ENCODE measurements at regions of chr10 and their contacts with region 1.

Region 1: DNA sequence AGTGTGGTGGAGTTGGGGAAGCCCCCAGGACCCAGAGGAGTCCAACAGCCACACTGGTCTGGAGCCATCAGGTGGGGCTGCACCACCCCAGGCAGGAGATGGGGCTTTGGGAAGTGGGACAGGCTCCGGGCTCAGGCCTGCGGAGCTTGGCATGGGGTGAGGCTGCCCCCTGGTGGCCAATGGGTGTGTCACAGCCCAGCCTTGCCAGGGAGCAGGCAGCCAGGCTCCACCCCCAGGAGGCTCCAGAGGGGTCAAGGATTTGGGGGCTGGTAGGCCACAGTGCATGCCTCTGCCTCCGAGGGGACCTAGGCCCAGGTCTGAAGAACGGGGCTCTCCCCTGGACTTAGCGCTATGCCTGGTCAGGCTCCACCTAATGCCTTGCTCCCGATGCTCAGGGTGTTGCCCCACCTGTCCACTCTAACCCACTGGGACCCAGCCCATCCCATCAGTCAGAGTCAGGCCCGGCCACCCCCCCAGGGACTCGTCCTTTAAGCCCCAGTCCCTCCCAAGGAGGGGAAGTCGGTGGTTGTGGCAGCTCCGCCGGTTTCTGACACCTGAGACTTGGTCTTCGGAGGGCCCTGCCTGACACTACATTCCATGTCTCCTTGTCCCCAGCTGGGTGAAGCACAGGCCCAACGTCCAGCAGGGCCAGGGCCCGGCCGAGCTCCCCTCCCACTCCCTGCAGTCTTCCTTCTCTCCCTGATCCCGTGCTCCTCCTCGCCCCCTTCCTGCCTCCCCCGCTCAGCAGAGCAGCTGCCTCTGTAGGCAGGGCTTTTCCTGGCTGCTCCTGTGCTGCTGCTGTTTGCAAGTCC is 11.3 kb upstream of the SAMD8 start:
- DNase-seq: peak; percentile 99
- ATAC-seq: peak; percentile 90
- H3K4me3 ChIP-seq: no peak overlapping the region
- H3K27ac ChIP-seq: no peak overlapping the region
- H3K4me1 ChIP-seq: peaks cover 7% of the 10 kb centered on the region; the same call in 1 of the 2 replicates
- H3K27me3 ChIP-seq: no peaks in the 10 kb centered on the region
- CTCF ChIP-seq: peak; percentile 100

Region 2: DNA sequence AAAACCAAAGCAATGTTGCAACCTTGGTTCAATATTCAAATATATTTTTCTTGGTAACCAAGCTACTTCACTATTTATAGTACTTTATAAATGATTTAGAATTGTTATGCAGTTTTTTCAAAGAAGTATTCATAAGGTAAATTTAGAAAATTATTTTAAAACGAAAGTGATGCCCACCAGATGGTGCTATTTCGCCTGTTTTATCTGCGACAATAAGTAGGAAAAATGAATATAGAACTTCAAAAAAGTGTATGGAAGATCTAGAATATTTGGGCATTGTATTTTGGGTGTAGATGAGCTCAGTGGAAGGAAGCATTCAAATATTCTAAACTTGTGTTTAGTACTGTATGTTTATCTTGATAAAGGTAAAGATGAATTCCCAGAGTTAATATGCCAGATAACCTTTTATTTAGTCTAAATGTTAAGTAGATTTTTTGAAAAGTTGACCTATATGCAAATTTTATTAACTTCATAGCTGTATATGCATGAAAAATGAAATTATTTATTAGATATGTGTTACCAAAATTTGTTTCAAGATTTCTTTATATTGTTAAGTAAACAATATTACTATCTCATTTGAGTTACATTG is 856.0 kb before region 1 on chr10:
- CTCF ChIA-PET with region 1: interaction called, 7 read pairs
- POLR2A ChIA-PET with region 1: no interaction called
- intact Hi-C with region 1: loop called (anchors 1 kb)
- DNase-seq: peak; percentile 99
- ATAC-seq: peak; percentile 20; the same call in 1 of the 2 replicates
- H3K4me3 ChIP-seq: no peak overlapping the region
- H3K27ac ChIP-seq: no peak overlapping the region
- H3K4me1 ChIP-seq: no peaks in the 10 kb centered on the region
- H3K27me3 ChIP-seq: no peaks in the 10 kb centered on the region
- CTCF ChIP-seq: peak; percentile 100

Region 3: DNA sequence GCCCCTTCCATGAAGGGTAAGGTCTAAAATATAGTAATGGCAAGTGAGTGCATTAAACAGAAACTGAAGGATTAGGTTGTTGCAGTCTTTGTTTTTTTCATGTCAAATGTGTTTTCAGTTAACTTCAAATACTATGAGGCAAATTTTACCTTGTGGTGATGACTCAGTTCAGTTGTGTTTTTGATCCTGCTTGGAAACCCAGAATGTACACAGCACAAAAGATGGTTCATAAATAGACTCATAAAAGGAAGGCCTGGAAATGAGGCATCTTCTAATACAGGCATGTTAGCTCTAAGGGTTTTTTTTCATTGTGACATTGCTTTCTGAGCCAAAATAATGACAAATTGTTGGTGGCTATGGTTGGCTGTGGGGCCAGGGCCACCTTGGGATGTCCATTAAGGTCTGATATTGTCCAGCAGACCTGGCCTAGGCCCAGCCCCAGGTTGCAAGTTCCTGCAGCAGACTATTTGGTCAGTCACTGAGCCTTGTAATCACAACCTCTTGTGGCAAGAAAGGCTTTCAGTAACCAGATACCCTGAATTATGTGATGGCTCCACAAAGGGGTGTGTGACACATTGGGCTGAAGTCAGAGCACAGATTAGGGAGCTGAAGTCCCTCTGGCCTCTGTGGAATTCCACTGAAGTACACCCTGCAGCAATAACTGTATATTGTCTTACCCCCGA is 57.7 kb before region 1 on chr10:
- CTCF ChIA-PET with region 1: interaction called, 3 read pairs
- POLR2A ChIA-PET with region 1: no interaction called
- intact Hi-C with region 1: loop called (anchors 2 kb)
- DNase-seq: peak; percentile 93
- ATAC-seq: peak; percentile 93
- H3K4me3 ChIP-seq: no peak overlapping the region
- H3K27ac ChIP-seq: peak overlapping the region; percentile 63
- H3K4me1 ChIP-seq: peaks cover 18% of the 10 kb centered on the region
- H3K27me3 ChIP-seq: no peaks in the 10 kb centered on the region
- CTCF ChIP-seq: no peak